ENCODE measurements at regions of chr7 and their contacts with region 1.

Region 1: GRCh38 chr7:98106647-98107445 is at the start of gene LMTK2:
- DNase-seq: peak; percentile 98 to 100
- ATAC-seq: peak; percentile 100
- H3K4me3 ChIP-seq: peak within 1 kb of the TSS; percentile 75
- H3K4me3 Mint-ChIP-seq: peak within 1 kb of the TSS; percentile 95
- H3K27ac ChIP-seq: peak within 1 kb of the TSS; percentile 58
- H3K27ac Mint-ChIP-seq: peak within 1 kb of the TSS; percentile 70 to 97
- H3K4me1 ChIP-seq: peaks cover 4% of the 10 kb centered on the region
- H3K4me1 Mint-ChIP-seq: peaks cover 26 to 39% of the 10 kb centered on the region in 2 donors
- H3K27me3 ChIP-seq: peaks cover 2% of the 10 kb centered on the region
- H3K27me3 Mint-ChIP-seq: peaks cover 6 to 7% of the 10 kb centered on the region in 2 donors
- CTCF ChIP-seq: peak; percentile 95
- total RNA-seq, gene LMTK2: 18.7 to 33.9 (median 26.6) TPM

Region 2: DNA sequence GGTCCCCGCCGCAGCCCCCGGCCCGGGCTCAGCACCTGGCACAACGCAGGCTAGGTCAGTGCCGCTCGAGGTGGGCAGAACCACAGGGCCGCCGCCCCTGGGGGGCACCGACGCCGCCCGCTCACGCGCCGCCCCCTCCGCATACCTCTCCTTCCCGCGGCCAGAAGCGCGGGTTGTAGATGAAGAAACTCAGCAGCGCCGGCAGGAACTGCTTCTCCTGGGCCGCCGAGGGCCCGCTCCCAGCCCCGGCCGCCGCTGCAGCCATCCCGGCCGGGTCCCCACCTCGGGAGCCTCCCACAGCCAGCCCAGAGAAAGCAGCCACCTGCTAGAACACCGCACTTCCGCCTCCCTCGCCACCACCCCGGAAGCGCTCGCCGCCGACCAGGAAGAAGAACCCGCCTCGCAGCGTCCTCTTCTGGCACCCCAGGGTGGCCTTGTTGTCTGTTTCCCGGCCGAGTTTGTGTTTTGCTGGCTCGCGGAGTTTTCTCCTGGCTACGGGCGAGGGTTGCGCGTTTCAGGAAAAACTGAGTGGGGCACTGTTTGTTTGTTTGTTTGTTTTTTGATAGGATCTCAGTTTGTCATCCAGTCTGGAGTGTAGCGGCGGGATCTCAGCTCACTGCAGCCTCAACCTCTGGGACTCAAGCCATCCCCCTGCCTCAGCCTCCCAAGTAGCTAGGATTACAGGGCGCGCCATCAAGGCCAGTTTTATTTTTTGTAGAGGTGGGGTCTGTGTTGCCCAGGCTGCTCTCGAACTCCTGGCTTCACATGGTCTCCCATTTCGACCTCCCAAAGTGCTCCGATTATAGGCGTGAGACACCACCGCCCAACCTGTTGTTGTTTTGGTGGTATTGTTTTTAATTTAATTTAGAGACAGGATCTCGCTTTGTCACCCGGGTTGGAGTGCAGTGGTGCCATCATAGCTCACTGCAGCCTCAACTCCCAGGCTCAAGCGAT is 134.6 kb before region 1 on chr7:
- intact Hi-C with region 1: no loop called
- DNase-seq: peak; percentile 66 to 89
- ATAC-seq: peak; percentile 87 to 92 (median 90)
- H3K4me3 ChIP-seq: peak overlapping the region; percentile 82
- H3K4me3 Mint-ChIP-seq: peak overlapping the region; percentile 95
- H3K27ac ChIP-seq: peak overlapping the region; percentile 55
- H3K27ac Mint-ChIP-seq: peak overlapping the region; percentile 86 to 94
- H3K4me1 ChIP-seq: peaks cover 17% of the 10 kb centered on the region
- H3K4me1 Mint-ChIP-seq: peaks cover 6 to 18% of the 10 kb centered on the region in 2 donors
- H3K27me3 ChIP-seq: no peaks in the 10 kb centered on the region
- H3K27me3 Mint-ChIP-seq: no peaks in the 10 kb centered on the region
- CTCF ChIP-seq: no peak

Region 3: DNA sequence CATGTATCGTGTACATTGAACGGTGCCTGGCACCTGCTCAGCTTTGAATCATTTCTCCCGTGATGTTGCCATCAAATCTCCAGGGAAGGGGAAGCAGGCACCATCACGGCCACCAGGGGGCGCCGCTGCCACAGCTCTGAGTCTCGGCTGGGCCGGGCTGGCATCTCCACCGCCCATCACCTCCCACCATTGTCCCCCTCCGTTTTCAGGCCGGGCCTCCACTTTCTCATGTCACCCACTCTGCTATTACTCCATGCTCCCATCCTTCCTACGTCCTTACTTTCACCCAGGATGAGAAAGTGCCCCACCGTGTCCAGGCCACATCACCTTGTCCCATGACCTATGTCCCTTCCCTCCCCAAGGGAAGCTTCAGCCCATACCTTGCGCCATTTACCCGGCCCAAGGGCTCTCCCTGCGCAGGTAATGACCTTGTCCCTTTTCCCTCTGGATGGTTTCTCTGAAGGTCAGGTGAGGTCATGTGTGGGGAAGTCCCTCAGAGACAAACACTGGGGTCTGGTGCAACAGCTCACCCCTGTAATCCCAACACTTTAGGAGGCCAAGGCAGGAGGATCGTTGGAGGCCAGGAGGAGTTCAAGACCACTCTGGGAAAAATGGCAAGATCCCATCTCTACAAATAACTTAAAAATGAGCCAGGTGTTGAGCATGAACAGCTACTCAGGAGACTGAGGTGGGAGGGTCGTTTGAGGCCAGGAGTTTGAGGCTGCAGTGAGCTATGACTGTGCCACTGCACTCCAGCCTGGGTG is 85.1 kb before region 1 on chr7:
- intact Hi-C with region 1: loop called (anchors 2 kb)
- DNase-seq: peak; percentile 76 to 84
- ATAC-seq: peak; percentile 77 to 95 (median 89)
- H3K4me3 ChIP-seq: no peak overlapping the region
- H3K4me3 Mint-ChIP-seq: no peak overlapping the region
- H3K27ac ChIP-seq: no peak overlapping the region
- H3K27ac Mint-ChIP-seq: no peak overlapping the region
- H3K4me1 ChIP-seq: peaks cover 6% of the 10 kb centered on the region
- H3K4me1 Mint-ChIP-seq: peaks cover 0 to 4% of the 10 kb centered on the region in 2 donors
- H3K27me3 ChIP-seq: no peaks in the 10 kb centered on the region
- H3K27me3 Mint-ChIP-seq: peaks cover 0 to 3% of the 10 kb centered on the region in 2 donors
- CTCF ChIP-seq: peak; percentile 92

Region 4: DNA sequence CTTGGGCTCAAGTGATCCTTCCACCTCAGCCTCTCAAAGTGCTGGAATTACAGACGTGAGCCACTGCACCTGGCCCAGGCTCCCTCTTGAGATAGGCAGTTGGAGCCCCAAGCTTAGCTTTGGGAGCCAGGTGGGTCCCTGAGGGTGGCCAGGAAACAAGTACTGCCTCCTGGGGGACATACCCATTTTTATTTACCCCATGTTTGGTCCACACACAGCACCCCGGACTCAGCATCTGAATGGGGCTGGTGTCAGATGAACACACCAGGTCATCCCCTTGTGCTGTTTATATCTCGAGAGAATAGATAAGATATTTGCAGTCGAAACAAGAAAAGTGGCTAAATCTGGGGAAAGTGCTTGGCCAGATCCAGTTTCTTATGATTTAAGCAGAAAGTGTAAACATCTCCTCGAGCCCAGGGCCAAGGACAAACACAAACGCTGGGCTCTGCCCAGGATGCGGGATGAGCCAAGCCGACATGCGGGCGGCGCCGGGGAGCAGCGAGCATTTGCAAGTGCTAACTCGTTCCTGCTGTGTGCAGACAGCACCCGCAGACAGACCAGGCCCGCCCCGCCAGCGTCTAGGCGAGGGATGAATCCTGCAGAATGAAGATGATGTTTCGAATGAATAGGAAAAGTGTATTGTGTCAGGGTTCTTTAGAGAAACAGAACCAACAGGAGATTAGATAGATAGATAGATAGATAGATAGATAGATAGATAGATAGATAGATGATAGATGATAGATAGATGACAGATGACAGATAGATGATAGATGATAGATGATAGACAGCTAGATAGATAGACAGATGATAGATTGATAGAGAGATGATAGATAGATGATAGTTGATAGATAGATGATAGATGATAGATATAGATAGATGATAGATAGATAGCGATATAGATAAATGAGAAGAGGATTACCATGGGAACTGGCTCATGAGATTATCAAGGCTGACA is 72.5 kb before region 1 on chr7:
- intact Hi-C with region 1: no loop called
- DNase-seq: no peak
- ATAC-seq: no peak
- H3K4me3 ChIP-seq: no peak overlapping the region
- H3K4me3 Mint-ChIP-seq: no peak overlapping the region
- H3K27ac ChIP-seq: no peak overlapping the region
- H3K27ac Mint-ChIP-seq: no peak overlapping the region
- H3K4me1 ChIP-seq: no peaks in the 10 kb centered on the region
- H3K4me1 Mint-ChIP-seq: no peaks in the 10 kb centered on the region
- H3K27me3 ChIP-seq: no peaks in the 10 kb centered on the region
- H3K27me3 Mint-ChIP-seq: peaks cover 0 to 5% of the 10 kb centered on the region in 2 donors
- CTCF ChIP-seq: no peak

Region 5: GRCh38 chr7:98133181-98133580 is 26.3 kb after region 1 on chr7:
- intact Hi-C with region 1: loop called (anchors 2 kb)
- DNase-seq: peak; percentile 20 to 66
- ATAC-seq: peak; percentile 45 to 63 (median 61)
- H3K4me3 ChIP-seq: no peak overlapping the region
- H3K4me3 Mint-ChIP-seq: peak overlapping the region; percentile 70
- H3K27ac ChIP-seq: no peak overlapping the region
- H3K27ac Mint-ChIP-seq: peak overlapping the region; percentile 72 to 87
- H3K4me1 ChIP-seq: peaks cover 32% of the 10 kb centered on the region
- H3K4me1 Mint-ChIP-seq: peaks cover 51 to 63% of the 10 kb centered on the region in 2 donors
- H3K27me3 ChIP-seq: peaks cover 2% of the 10 kb centered on the region
- H3K27me3 Mint-ChIP-seq: peaks cover 25 to 33% of the 10 kb centered on the region in 2 donors
- CTCF ChIP-seq: no peak

Region 6: GRCh38 chr7:98168181-98168905 is 61.5 kb after region 1 on chr7:
- intact Hi-C with region 1: loop called (anchors 1 kb)
- DNase-seq: peak; percentile 42 to 87
- ATAC-seq: peak; percentile 75 to 87 (median 80)
- H3K4me3 ChIP-seq: no peak overlapping the region
- H3K4me3 Mint-ChIP-seq: no peak overlapping the region
- H3K27ac ChIP-seq: no peak overlapping the region
- H3K27ac Mint-ChIP-seq: peak overlapping the region; percentile 24 to 70
- H3K4me1 ChIP-seq: no peaks in the 10 kb centered on the region
- H3K4me1 Mint-ChIP-seq: peaks cover 5 to 10% of the 10 kb centered on the region in 2 donors
- H3K27me3 ChIP-seq: no peaks in the 10 kb centered on the region
- H3K27me3 Mint-ChIP-seq: no peaks in the 10 kb centered on the region
- CTCF ChIP-seq: peak; percentile 95